Naive thymus-derived CD4-positive, alpha-beta T cell (primary cell): ENCODE measurements at regions of chr16 and their contacts with region 1.

Region 1: DNA sequence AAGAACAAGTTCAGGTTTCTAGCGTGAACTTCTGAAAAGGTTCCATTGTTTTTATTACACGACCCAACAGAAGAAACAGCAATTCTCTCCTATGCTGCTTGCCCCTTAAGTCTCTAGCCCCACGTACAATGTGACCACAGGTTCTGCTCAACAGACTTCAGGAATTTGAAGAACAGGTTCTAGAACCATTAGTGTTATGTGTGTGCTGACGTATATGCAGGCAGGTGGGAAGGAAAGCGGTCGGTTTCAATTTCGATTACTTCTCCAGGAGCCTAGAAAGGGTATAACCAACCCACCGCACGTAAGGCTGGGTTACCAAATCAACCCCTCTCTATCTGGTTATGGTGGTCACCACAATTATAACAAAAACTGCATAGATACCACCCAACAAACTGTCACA is 39.4 kb downstream of the XPO6 start:
- DNase-seq: no peak
- ATAC-seq: no peak
- H3K4me3 ChIP-seq: no peak overlapping the region
- H3K4me3 Mint-ChIP-seq: peak overlapping the region in 3 of 10 donors; percentile 7 to 28 (median 14)
- H3K27ac ChIP-seq: peak overlapping the region; percentile 47
- H3K27ac Mint-ChIP-seq: peak overlapping the region in 8 of 9 donors; percentile 79 to 92 (median 88)
- H3K4me1 ChIP-seq: peaks cover 20 to 50% of the 10 kb centered on the region in 2 donors
- H3K4me1 Mint-ChIP-seq: peaks cover 38 to 90% (median 75%) of the 10 kb centered on the region in 7 donors
- H3K27me3 ChIP-seq: no peaks in the 10 kb centered on the region
- H3K27me3 Mint-ChIP-seq: no peaks in the 10 kb centered on the region

Region 2: GRCh38 chr16:28188085-28188916 is 16.0 kb after region 1 on chr16:
- CTCF ChIA-PET with region 1: interaction called, 3 read pairs
- POLR2A ChIA-PET with region 1: interaction called, 14 read pairs
- intact Hi-C with region 1: loop called (anchors 1 to 2 kb)
- DNase-seq: no peak
- ATAC-seq: peak; percentile 10
- H3K4me3 ChIP-seq: peak overlapping the region; percentile 30
- H3K4me3 Mint-ChIP-seq: peak overlapping the region; percentile 64 to 81 (median 73)
- H3K27ac ChIP-seq: peak overlapping the region; percentile 66
- H3K27ac Mint-ChIP-seq: peak overlapping the region; percentile 75 to 95 (median 90)
- H3K4me1 ChIP-seq: peaks cover 64 to 79% of the 10 kb centered on the region in 2 donors
- H3K4me1 Mint-ChIP-seq: peaks cover 74 to 97% (median 91%) of the 10 kb centered on the region in 7 donors
- H3K27me3 ChIP-seq: no peaks in the 10 kb centered on the region
- H3K27me3 Mint-ChIP-seq: no peaks in the 10 kb centered on the region

Region 3: GRCh38 chr16:28473714-28474265 is 301.5 kb after region 1 on chr16:
- CTCF ChIA-PET with region 1: no interaction called
- POLR2A ChIA-PET with region 1: no interaction called
- intact Hi-C with region 1: no loop called
- DNase-seq: peak in 1 of 9 donors; percentile 21
- ATAC-seq: no peak
- H3K4me3 ChIP-seq: no peak overlapping the region
- H3K4me3 Mint-ChIP-seq: no peak overlapping the region
- H3K27ac ChIP-seq: no peak overlapping the region
- H3K27ac Mint-ChIP-seq: peak overlapping the region in 7 of 9 donors; percentile 29 to 81 (median 52)
- H3K4me1 ChIP-seq: peaks cover 0 to 3% of the 10 kb centered on the region in 2 donors
- H3K4me1 Mint-ChIP-seq: peaks cover 0 to 7% (median 5%) of the 10 kb centered on the region in 7 donors
- H3K27me3 ChIP-seq: no peaks in the 10 kb centered on the region
- H3K27me3 Mint-ChIP-seq: no peaks in the 10 kb centered on the region